PC-9 (cell line): ENCODE measurements at regions of chr11 and their contacts with region 1.

Region 1: DNA sequence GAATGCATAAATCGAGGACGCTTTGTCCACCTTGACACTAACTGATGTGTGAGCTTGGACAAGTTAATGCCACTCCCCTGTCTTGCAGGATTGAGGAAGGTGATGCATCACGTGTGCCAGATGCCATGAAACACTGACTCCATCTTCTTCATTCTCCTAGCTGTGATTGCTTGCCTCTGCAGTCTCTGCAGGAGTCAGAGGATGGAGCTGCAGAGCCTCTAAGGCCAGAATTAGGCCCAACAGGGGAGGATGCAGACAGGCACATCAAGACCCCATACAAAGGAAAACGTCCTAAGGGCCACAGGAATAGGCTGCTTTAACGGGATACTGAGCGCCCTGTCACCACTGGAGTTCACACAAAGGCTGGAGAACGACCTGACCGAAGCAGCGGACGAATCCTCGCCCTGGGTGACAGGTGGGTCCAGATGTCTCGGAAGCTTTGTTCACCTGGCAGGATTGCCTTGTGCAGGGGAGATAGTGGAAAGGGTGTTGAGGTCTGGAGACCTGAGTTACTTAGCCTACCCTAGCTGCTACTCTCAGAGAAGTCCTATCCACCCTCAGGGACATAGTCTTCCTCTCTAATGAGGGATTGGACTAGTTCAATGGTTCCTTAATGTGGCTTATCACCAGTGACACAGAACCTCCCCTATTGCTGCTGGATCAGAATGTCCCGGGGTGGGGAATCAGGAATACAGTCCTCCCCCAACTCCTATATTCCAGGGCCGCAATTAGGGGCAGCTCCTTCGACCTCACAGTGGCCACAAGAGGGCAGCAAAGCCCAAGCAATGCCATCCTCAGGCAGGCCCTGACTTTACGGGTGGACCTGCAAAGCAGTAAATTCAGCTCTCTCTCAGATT is 32.4 kb downstream of the DBX1 start:
- DNase-seq: peak; percentile 51 to 72
- H3K4me3 ChIP-seq: no peak overlapping the region
- H3K27ac ChIP-seq: no peak overlapping the region
- H3K4me1 ChIP-seq: no peaks in the 10 kb centered on the region
- H3K27me3 ChIP-seq: no peaks in the 10 kb centered on the region
- CTCF ChIP-seq: peak; percentile 93

Region 2: GRCh38 chr11:19664896-19665548 is 462.9 kb before region 1 on chr11:
- CTCF ChIA-PET with region 1: interaction called, 16 read pairs
- POLR2A ChIA-PET with region 1: no interaction called
- intact Hi-C with region 1: no loop called
- DNase-seq: no peak
- H3K4me3 ChIP-seq: no peak overlapping the region
- H3K27ac ChIP-seq: no peak overlapping the region
- H3K4me1 ChIP-seq: peaks cover 35% of the 10 kb centered on the region
- H3K27me3 ChIP-seq: no peaks in the 10 kb centered on the region
- CTCF ChIP-seq: no peak

Region 3: DNA sequence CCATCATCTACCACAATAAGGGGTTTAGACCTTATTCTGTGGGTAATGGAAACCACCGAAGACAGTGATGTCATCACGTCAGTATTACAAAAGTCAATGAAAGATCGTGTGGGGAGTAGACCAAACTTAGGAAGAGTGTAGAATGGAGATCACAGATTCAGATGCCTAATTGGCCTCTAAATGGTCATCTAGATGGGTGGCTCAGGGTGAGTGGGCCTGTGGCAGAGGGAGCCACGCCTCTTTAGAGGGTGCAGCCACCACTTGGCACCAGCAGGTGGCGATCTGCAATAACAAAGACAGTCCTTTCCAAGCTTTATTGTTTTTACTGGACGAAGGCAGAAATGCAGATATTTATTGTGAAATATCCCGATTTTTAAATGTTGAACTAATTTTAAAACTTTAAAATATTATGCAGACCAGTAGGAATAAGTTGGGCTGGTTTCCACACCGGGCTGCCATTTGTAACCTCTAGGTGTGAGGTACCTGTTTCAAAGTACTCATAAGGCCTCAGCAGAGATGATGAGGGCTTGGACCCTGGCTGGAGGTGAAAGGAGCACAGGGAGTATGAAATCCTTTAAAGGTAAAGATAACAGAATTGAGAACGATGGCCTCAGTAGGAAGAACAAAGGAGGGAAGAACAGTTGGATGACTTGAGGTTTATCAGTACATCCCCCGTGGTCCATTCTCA is 189.6 kb before region 1 on chr11:
- CTCF ChIA-PET with region 1: no interaction called
- POLR2A ChIA-PET with region 1: no interaction called
- intact Hi-C with region 1: loop called (anchors 5 kb)
- DNase-seq: peak in 1 of 2 experiments; percentile 45
- H3K4me3 ChIP-seq: no peak overlapping the region
- H3K27ac ChIP-seq: peak overlapping the region; percentile 56
- H3K4me1 ChIP-seq: peaks cover 29% of the 10 kb centered on the region
- H3K27me3 ChIP-seq: no peaks in the 10 kb centered on the region
- CTCF ChIP-seq: peak; percentile 85

Region 4: DNA sequence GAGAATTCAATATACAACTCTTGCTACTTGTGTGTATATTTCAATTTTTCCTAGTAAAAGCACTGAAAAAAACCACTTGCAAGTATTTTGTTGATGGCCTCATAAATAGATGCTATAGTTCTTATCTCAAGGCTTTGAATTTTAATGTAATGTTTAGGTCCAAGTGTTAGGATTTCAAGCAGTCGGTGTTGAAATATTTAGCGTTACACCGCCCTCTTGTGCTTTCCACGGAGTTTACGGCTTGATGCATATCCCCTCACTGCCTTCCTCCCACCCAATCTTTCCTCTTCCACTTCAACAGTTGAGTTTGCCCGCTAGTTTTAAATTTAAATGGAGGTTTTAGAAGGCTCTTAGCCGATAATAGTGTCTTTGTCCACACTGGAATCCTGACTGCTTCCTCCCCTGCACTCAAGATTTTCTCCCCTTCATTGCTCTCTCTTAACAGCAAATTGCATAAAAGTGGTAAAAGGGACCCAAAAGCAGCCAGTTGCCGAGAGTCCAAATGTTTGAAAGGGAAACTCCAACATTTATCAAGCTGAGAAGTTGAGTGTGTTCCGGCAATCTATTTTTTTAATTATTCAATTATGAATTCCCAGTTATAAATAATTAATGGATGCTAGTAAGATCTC is 209.7 kb after region 1 on chr11:
- CTCF ChIA-PET with region 1: no interaction called
- POLR2A ChIA-PET with region 1: interaction called, 4 read pairs
- intact Hi-C with region 1: loop called (anchors 5 kb)
- DNase-seq: no peak
- H3K4me3 ChIP-seq: no peak overlapping the region
- H3K27ac ChIP-seq: no peak overlapping the region
- H3K4me1 ChIP-seq: no peaks in the 10 kb centered on the region
- H3K27me3 ChIP-seq: peaks cover 62% of the 10 kb centered on the region
- CTCF ChIP-seq: peak; percentile 55

Region 5: DNA sequence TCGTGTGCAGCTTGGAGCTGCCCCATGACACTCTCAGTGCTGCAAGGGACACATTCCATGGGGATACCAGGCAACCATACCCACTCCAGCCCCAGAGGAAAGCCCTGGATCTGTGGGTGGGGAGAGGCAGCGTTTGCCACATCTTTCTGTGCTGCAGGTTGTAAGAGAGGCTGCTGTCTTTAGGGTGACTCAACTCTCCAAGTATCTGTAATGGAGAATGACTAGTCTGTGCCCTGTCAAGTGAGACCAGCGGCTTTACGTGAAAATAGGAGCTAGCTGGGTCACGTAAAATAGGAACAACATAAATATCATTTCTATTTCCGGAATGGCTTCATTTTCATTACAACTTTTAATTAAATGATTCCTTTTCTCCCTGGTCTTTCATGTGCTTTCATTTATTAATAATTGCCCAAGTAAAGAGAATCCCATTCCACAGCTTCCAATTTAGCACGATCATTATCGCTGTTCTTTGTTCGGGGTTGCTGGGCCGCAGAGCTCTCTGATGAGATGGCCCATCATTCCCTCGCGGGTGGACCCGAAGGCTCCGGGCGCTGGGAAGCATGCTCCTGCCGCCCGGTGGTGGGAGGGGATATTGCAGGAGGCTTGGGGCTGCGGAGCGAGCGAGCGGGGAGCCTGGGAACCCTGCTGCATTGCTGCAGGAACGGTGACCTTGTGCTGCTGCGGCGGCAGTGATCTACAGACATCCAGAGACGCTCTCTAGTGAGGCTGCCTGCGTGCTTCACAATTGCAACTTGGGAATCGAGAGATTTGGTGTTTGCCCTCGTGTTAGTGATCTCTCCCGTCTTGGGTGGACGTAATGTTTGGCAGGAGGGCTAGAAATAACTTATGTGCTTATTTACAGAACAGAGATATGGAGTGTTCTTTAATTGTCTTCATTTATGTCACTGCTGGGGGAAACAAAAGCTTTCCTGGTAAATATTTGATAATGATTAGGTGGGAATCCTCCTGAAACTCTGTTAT is 482.1 kb after region 1 on chr11:
- CTCF ChIA-PET with region 1: no interaction called
- POLR2A ChIA-PET with region 1: no interaction called
- intact Hi-C with region 1: loop called (anchors 10 kb)
- DNase-seq: peak; percentile 34 to 67
- H3K4me3 ChIP-seq: no peak overlapping the region
- H3K27ac ChIP-seq: no peak overlapping the region
- H3K4me1 ChIP-seq: no peaks in the 10 kb centered on the region
- H3K27me3 ChIP-seq: peaks cover 54% of the 10 kb centered on the region
- CTCF ChIP-seq: peak; percentile 91